A549 (cell line): ENCODE measurements at regions of chr1 and their contacts with region 1.

Region 1: GRCh38 chr1:224675590-224675989 is 59.5 kb downstream of the CNIH3 start:
- DNase-seq: no peak
- ATAC-seq: no peak
- H3K4me3 ChIP-seq: no peak overlapping the region
- H3K27ac ChIP-seq: no peak overlapping the region
- H3K4me1 ChIP-seq: no peaks in the 10 kb centered on the region
- CTCF ChIP-seq: no peak
- EP300 ChIP-seq: no peak
- POLR2A ChIP-seq: no peak
- RAD21 ChIP-seq: no peak

Region 2: GRCh38 chr1:224757508-224757907 is 81.9 kb after region 1 on chr1:
- CTCF ChIA-PET with region 1: no interaction called
- POLR2A ChIA-PET with region 1: interaction called, 12 read pairs
- DNase-seq: no peak
- ATAC-seq: no peak
- H3K4me3 ChIP-seq: no peak overlapping the region
- H3K27ac ChIP-seq: no peak overlapping the region
- H3K4me1 ChIP-seq: no peaks in the 10 kb centered on the region
- CTCF ChIP-seq: no peak
- EP300 ChIP-seq: no peak
- POLR2A ChIP-seq: no peak
- RAD21 ChIP-seq: no peak

Region 3: DNA sequence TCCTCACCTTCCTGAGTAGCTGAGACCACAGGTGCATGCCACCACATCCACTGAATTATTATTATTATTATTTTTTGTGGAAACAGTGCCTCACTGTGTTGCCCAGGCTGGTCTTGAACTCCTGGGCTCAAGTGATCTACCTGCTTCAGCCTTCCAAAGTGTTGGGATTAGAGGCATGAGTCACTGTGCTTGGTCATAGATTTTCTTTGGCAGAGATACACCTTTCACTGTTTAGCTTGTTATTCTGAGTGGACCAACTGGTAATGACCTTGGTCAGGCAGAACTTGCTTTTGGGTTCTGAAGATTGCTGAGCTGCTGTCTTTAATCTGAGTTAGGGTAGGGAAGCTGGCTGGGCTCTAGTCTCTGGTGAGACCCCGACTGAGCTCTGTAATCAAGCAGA is 320.7 kb after region 1 on chr1:
- CTCF ChIA-PET with region 1: no interaction called
- POLR2A ChIA-PET with region 1: no interaction called
- DNase-seq: no peak
- ATAC-seq: no peak
- H3K4me3 ChIP-seq: no peak overlapping the region
- H3K27ac ChIP-seq: no peak overlapping the region
- H3K4me1 ChIP-seq: no peaks in the 10 kb centered on the region
- CTCF ChIP-seq: no peak
- EP300 ChIP-seq: no peak
- POLR2A ChIP-seq: no peak
- RAD21 ChIP-seq: no peak